Endothelial cell of umbilical vein (primary cell): ENCODE measurements at regions of chr9 and their contacts with region 1.

Region 1: DNA sequence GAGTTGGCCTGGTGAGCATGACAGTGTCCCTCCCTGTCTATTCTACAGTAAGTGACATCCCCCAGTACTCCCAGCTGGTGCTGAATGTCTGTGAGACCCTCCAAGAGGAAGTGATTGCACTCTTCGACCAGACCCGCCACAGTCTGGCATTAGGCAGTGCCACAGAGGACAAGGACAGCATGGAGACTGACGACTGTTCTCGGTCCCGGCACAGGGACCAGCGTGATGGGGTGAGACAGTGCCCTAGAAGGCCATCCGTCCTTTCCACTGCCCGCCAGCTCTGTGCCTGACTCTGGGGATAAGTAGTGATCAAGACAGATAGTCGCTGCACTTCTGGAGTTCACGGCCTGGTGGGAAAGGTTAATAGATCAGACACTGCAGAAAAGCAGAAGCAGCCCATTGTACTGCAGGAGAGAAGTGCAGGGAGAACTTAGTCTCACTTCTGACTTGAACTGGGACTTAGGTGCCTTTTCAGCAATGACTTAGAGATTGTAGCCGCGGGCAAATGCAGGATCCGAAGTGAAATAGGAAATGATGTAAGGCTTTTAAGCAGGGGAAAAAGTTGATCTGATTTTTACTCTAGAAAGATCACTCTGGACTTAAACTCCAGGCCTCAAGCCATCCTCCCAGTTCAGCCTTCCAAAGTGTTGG is 28.4 kb downstream of the SH3GLB2 start:
- DNase-seq: no peak
- H3K4me3 ChIP-seq: no peak overlapping the region
- H3K27ac ChIP-seq: no peak overlapping the region
- H3K4me1 ChIP-seq: no peaks in the 10 kb centered on the region
- H3K27me3 ChIP-seq: no peaks in the 10 kb centered on the region
- CTCF ChIP-seq: no peak
- POLR2A ChIP-seq: no peak

Region 2: GRCh38 chr9:129023036-129023907 is 23.6 kb after region 1 on chr9:
- CTCF ChIA-PET with region 1: interaction called, 8 read pairs
- POLR2A ChIA-PET with region 1: no interaction called
- dilution Hi-C with region 1: no loop called
- intact Hi-C with region 1: loop called (anchors 2 kb)
- DNase-seq: no peak
- H3K4me3 ChIP-seq: no peak overlapping the region
- H3K27ac ChIP-seq: no peak overlapping the region
- H3K4me1 ChIP-seq: peaks cover 7% of the 10 kb centered on the region
- H3K27me3 ChIP-seq: no peaks in the 10 kb centered on the region
- CTCF ChIP-seq: no peak
- POLR2A ChIP-seq: no peak